ENCODE measurements at regions of chr15 and their contacts with region 1.

Region 1: DNA sequence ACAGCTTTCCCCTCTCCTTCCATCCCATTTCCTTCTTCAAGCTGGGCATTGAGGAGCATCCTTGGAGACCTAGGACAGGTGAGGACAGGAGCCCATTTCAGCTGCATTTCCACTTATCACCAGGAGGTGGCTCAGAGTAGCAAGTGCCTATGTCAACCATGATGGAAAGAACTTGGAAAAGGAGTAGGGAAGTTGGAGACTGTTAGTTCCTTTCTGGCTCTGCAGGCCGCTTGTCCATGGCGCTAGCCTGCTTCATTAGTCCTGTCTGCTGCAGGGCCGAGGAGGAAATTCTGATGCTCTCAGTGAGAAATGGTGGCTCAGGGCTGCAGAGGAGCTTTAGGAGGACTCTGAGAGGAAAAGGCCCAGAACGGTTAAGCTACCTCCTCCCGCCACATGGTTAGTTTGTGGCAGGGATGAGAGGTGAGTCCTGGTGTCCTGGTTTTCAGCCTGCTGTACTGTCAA is 7.0 kb upstream of the CD276 start:
- DNase-seq: peak; percentile 63
- ATAC-seq: peak; percentile 65
- H3K4me3 Mint-ChIP-seq: no peak overlapping the region
- H3K27ac Mint-ChIP-seq: no peak overlapping the region
- H3K4me1 Mint-ChIP-seq: peaks cover 12% of the 10 kb centered on the region
- H3K27me3 Mint-ChIP-seq: peaks cover 47% of the 10 kb centered on the region

Region 2: GRCh38 chr15:73660455-73660854 is 16.7 kb before region 1 on chr15:
- CTCF ChIA-PET with region 1: interaction called, 24 read pairs
- POLR2A ChIA-PET with region 1: no interaction called
- DNase-seq: no peak
- ATAC-seq: no peak
- H3K4me3 Mint-ChIP-seq: no peak overlapping the region
- H3K27ac Mint-ChIP-seq: no peak overlapping the region
- H3K4me1 Mint-ChIP-seq: peaks cover 6% of the 10 kb centered on the region
- H3K27me3 Mint-ChIP-seq: peaks cover 21% of the 10 kb centered on the region